ENCODE measurements at regions of chr17 and their contacts with region 1.

Region 1: DNA sequence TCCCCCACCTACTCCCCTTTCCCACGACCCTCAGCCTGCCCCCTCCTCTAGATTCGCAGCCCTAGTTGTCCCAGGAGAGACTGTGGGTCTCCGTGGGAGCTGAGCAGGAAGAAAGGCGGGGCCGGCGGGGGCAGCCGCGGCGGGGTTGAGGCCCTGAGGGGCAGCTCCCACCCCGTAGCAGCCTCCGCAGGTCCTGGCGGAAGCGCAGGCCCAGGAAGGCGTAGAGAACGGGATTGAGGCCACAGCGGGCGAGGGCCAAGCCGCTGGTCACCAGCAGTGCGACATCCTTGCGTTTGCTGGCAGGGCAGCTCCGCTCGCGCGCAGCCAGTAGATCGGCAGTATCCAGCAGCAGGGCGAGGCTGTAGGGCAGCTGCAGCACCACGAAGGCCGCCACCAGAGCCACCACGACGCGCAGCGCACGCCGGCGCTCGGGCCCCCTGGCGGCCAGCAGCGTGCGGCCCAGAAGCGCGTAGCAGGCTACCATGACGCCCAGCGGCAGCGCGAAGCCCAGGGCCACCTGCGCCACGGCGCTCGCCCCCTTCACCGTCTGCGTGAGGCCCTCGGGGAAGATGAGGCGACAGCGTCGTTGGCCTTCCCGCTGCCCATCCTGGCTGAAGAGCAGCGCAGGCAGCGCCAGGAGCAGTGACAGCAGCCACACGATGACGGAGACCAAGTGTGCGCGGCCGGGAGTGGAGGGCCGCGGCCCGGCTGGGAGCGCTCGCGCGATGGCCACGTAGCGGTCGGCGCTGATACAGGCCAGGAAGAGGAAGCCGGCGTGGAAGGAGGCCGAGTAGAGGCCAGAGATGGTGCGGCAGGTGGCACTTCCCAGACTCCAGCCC is 1.9 kb downstream of the CCR10 start:
- DNase-seq: peak; percentile 39 to 87 (median 62)
- ATAC-seq: peak; percentile 53 to 65 (median 58)
- H3K4me3 ChIP-seq: peak overlapping the region; percentile 47 to 60
- H3K4me3 Mint-ChIP-seq: peak overlapping the region; percentile 73 to 87 (median 74)
- H3K27ac ChIP-seq: peak overlapping the region; percentile 62
- H3K27ac Mint-ChIP-seq: peak overlapping the region; percentile 74 to 87
- H3K4me1 ChIP-seq: peaks cover 37 to 84% of the 10 kb centered on the region in 2 experiments
- H3K4me1 Mint-ChIP-seq: peaks cover 52 to 71% (median 63%) of the 10 kb centered on the region in 3 donors
- H3K27me3 ChIP-seq: peaks cover 3 to 68% of the 10 kb centered on the region in 2 experiments
- H3K27me3 Mint-ChIP-seq: peaks cover 27 to 48% of the 10 kb centered on the region in 2 donors

Region 2: GRCh38 chr17:42598905-42599304 is 80.8 kb before region 1 on chr17:
- CTCF ChIA-PET with region 1: no interaction called
- POLR2A ChIA-PET with region 1: interaction called in 1 of 2 experiments, 15 read pairs
- DNase-seq: no peak
- ATAC-seq: no peak
- H3K4me3 ChIP-seq: no peak overlapping the region
- H3K4me3 Mint-ChIP-seq: peak overlapping the region in 1 of 3 donors; percentile 15
- H3K27ac ChIP-seq: no peak overlapping the region
- H3K27ac Mint-ChIP-seq: peak overlapping the region in 1 of 2 donors; percentile 19
- H3K4me1 ChIP-seq: peaks cover 0 to 16% of the 10 kb centered on the region in 2 experiments
- H3K4me1 Mint-ChIP-seq: peaks cover 35 to 44% (median 41%) of the 10 kb centered on the region in 3 donors
- H3K27me3 ChIP-seq: no peaks in the 10 kb centered on the region
- H3K27me3 Mint-ChIP-seq: no peaks in the 10 kb centered on the region